ENCODE measurements at regions of chr1 and their contacts with region 1.

Region 1: GRCh38 chr1:155091071-155091709 is 12.6 kb downstream of the EFNA3 start:
- DNase-seq: peak; percentile 91
- H3K4me3 Mint-ChIP-seq: peak overlapping the region; percentile 29
- H3K27ac Mint-ChIP-seq: no peak overlapping the region
- H3K4me1 Mint-ChIP-seq: peaks cover 10% of the 10 kb centered on the region
- H3K27me3 Mint-ChIP-seq: peaks cover 21% of the 10 kb centered on the region
- CTCF ChIP-seq: peak; percentile 97

Region 2: DNA sequence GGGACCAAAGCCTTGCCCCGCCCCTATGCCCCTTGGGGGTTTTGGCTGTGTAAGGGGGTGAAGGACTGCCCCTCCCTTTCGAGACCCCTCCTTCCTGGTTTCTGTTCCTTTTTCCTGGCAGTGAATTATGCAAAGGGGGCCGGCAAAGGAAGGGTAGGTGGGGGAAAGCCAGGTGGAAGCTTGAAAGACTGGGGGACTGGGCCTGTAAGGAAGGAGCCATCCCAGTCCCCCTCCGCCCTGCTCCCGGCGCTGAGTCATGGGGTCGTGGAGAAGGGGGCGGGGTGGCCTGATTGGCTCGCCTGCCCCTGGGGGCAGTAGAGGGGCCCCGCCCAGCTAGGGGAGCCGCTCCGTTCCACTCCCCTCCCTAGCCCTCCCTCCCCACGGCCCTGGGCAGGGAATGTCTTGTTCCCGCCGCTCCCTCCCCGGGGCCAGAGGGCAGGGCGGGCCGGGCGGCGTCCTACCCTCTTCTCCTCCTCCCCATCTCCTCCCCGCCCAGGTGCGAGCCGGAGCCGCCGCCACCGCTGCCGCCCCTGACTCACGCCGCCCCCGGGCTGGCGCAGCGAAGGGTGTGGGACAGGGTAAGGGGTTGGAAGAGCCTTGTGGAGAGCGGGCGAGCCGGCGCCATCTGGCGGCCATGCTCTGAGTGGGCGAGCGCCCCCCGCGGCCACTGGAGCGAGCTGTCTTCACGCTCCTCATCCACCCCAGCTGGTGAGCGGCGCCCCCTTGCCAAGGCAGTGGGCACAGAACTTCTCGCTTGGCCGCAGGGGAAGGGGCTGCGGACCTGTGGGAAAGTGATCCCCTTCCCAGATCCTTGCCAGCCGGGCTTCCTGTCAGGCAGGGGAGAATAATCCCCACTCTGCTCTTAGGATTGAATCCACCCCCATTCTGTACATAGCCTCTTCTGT is 73.9 kb before region 1 on chr1:
- CTCF ChIA-PET with region 1: no interaction called
- intact Hi-C with region 1: no loop called
- DNase-seq: peak; percentile 96
- H3K4me3 Mint-ChIP-seq: peak overlapping the region; percentile 60
- H3K27ac Mint-ChIP-seq: peak overlapping the region; percentile 79
- H3K4me1 Mint-ChIP-seq: peaks cover 37% of the 10 kb centered on the region
- H3K27me3 Mint-ChIP-seq: no peaks in the 10 kb centered on the region
- CTCF ChIP-seq: peak; percentile 99

Region 3: GRCh38 chr1:155105604-155106022 is 14.4 kb after region 1 on chr1:
- CTCF ChIA-PET with region 1: no interaction called
- intact Hi-C with region 1: no loop called
- DNase-seq: no peak
- H3K4me3 Mint-ChIP-seq: no peak overlapping the region
- H3K27ac Mint-ChIP-seq: no peak overlapping the region
- H3K4me1 Mint-ChIP-seq: no peaks in the 10 kb centered on the region
- H3K27me3 Mint-ChIP-seq: peaks cover 23% of the 10 kb centered on the region
- CTCF ChIP-seq: no peak

Region 4: DNA sequence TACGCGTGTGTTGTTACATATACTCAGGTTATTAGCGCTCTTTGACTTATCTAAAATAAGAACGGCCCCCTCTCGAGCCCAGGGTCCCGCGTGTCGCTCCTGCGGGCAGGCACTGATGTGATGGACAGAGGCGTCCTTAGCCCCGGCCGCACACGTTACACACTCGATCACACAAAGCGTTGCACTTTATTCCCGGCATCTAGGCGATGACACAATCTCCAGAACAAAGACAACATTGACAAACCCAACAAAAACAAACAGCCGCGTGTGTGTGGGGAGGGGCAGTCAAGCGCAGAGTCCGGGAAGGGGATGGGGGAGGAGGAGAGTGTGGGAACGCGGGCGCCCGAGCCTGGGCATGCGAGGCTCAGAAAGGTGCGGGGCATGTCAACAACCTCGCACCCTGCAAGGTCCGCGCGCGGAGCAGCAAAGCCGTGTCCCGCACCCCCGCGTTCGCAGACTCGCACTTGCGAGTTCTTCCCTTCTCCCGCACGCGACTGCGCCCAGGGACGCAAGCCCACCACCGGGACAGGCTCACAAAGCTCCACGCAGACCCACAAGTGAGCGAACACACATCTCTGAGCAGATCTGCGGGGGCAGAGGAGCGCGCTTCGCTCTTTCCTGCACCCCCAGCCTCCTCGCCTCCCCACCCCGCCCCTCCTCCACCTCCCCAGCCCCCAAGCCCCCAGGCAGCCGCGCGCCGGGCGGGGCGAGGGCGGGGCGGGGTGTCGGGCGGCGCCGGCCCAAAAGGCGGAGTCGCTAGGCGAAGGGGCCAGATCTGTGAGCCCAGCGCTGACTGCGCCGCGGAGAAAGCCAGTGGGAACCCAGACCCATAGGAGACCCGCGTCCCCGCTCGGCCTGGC is 36.1 kb after region 1 on chr1 and contains the start of gene EFNA1:
- CTCF ChIA-PET with region 1: interaction called, 13 read pairs
- intact Hi-C with region 1: loop called (anchors 5 kb)
- DNase-seq: peak; percentile 88
- H3K4me3 Mint-ChIP-seq: peak within 1 kb of the TSS; percentile 91
- H3K27ac Mint-ChIP-seq: peak within 1 kb of the TSS; percentile 69
- H3K4me1 Mint-ChIP-seq: peaks cover 71% of the 10 kb centered on the region
- H3K27me3 Mint-ChIP-seq: no peaks in the 10 kb centered on the region
- CTCF ChIP-seq: no peak
- total RNA-seq, gene EFNA1: 33.7 and 41.7 TPM in 2 replicates

Region 5: GRCh38 chr1:155185351-155186066 is 94.3 kb after region 1 on chr1:
- CTCF ChIA-PET with region 1: no interaction called
- intact Hi-C with region 1: no loop called
- DNase-seq: peak; percentile 58
- H3K4me3 Mint-ChIP-seq: no peak overlapping the region
- H3K27ac Mint-ChIP-seq: no peak overlapping the region
- H3K4me1 Mint-ChIP-seq: peaks cover 37% of the 10 kb centered on the region
- H3K27me3 Mint-ChIP-seq: peaks cover 57% of the 10 kb centered on the region
- CTCF ChIP-seq: no peak

Region 6: DNA sequence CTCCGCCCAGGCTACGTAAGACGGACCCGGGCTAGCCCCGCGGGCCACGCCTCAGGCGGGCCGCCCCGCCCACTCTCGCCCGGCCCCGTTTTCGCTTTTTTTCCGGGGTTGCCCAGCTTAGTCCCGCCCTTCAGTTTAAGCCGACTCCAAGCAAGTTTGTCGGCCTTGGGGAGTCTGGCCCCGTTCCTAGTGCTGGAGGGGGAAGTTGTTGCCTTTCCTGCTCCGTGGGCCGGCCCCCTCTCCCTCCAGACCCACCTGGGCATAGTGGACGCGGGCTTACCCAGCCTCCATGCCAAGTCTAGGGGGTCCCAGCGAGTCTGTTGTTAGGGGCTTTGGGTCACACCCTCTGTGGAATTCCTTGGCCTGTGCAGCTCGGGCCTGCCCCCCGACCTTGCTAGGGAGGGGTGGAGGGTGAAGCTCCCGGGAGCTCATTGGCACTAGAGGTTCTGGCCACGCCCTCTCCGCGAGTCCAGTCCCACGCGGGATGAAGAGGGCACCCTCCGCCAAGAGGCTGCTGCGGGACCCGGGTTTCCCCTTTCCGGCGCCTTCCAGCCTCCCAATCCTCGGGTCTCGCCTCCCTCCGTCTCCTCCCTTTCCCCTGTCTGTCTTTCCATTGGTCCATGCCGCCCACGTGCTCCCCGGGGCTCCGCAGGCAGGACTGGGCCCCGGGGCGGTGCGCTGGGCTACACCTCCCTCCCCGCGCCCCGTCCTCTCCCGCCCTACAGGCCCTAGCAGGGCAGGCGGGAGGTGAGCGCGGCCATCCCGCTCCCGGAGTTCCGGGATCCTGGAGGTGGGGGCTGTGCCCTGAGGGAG is 232.8 kb after region 1 on chr1:
- CTCF ChIA-PET with region 1: no interaction called
- intact Hi-C with region 1: no loop called
- DNase-seq: peak; percentile 98
- H3K4me3 Mint-ChIP-seq: peak overlapping the region; percentile 90
- H3K27ac Mint-ChIP-seq: peak overlapping the region; percentile 60
- H3K4me1 Mint-ChIP-seq: peaks cover 41% of the 10 kb centered on the region
- H3K27me3 Mint-ChIP-seq: no peaks in the 10 kb centered on the region
- CTCF ChIP-seq: no peak

Measured in Calu3 (cell line).